ENCODE measurements at regions of chr2 and their contacts with region 1.

Region 1: GRCh38 chr2:134897932-134898331 is 20.7 kb upstream of the CCNT2 start:
- DNase-seq: peak; percentile 8
- ATAC-seq: no peak
- H3K4me3 ChIP-seq: no peak overlapping the region
- H3K27ac ChIP-seq: no peak overlapping the region
- H3K4me1 ChIP-seq: no peaks in the 10 kb centered on the region
- H3K27me3 ChIP-seq: no peaks in the 10 kb centered on the region
- CTCF ChIP-seq: peak; percentile 51
- POLR2A ChIP-seq: no peak
- RAD21 ChIP-seq: peak; percentile 53

Region 2: GRCh38 chr2:134460583-134460998 is 437.3 kb before region 1 on chr2:
- CTCF ChIA-PET with region 1: interaction called, 3 read pairs
- POLR2A ChIA-PET with region 1: no interaction called
- dilution Hi-C with region 1: no loop called
- in situ Hi-C with region 1: loop called (anchors 5 kb)
- intact Hi-C with region 1: loop called (anchors 1 kb)
- DNase-seq: peak; percentile 47
- ATAC-seq: peak; percentile 74
- H3K4me3 ChIP-seq: no peak overlapping the region
- H3K27ac ChIP-seq: no peak overlapping the region
- H3K4me1 ChIP-seq: no peaks in the 10 kb centered on the region
- H3K27me3 ChIP-seq: peaks cover 15% of the 10 kb centered on the region
- CTCF ChIP-seq: peak; percentile 58
- POLR2A ChIP-seq: no peak
- RAD21 ChIP-seq: peak; percentile 66

Region 3: DNA sequence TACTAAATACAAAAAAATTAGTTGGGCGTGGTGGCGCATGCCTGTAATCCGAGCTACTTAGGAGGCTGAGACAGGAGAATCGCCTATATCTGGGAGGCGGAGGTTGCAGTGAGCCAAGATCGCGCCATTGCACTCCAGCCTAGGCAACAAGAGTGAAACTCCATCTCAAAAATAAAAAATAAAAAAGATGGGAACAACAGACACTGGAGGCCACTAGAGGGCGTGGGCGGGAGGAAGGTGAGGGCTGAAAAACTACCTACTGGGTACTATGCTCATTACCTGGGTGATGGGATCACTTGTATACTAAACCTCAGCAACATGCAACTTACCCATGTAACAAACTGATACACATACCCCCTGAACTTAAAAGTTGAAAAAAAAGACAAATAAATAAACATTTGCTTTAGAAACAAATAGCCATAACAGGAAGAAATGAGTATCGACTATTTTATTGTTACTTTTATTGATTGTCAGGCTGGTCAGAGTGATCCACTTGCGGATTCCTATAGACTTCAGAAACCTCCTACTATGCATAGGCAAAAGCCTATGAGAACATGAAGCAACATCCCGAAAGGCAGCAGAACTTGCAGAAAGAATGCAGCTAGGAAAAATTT is 240.2 kb before region 1 on chr2:
- CTCF ChIA-PET with region 1: no interaction called
- POLR2A ChIA-PET with region 1: no interaction called
- dilution Hi-C with region 1: no loop called
- in situ Hi-C with region 1: no loop called
- intact Hi-C with region 1: loop called (anchors 2 kb)
- DNase-seq: no peak
- ATAC-seq: no peak
- H3K4me3 ChIP-seq: no peak overlapping the region
- H3K27ac ChIP-seq: no peak overlapping the region
- H3K4me1 ChIP-seq: no peaks in the 10 kb centered on the region
- H3K27me3 ChIP-seq: no peaks in the 10 kb centered on the region
- CTCF ChIP-seq: peak; percentile 30; the same call in 1 of the 2 replicates
- POLR2A ChIP-seq: no peak
- RAD21 ChIP-seq: no peak

Region 4: DNA sequence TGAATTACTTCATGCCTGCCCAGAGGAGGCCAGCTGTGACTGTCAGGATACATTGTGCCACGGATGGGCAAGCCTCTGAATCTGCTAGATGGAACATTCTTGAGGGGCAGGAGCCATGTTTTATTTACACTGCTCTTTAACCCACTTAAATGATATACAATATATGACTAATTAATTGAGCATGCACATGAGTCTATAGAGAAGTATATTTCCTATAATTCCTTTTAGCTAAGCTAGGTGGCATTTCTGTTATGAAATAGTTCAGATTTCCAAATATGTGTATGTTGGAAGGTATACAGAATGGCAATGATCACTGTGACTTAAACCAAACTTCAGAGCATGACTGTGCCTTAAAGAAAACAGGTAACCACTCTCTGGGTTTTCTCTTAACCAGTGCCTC is 285.9 kb after region 1 on chr2:
- CTCF ChIA-PET with region 1: no interaction called
- POLR2A ChIA-PET with region 1: no interaction called
- dilution Hi-C with region 1: no loop called
- in situ Hi-C with region 1: no loop called
- intact Hi-C with region 1: no loop called
- DNase-seq: peak; percentile 33
- ATAC-seq: peak; percentile 69
- H3K4me3 ChIP-seq: no peak overlapping the region
- H3K27ac ChIP-seq: no peak overlapping the region
- H3K4me1 ChIP-seq: peaks cover 2% of the 10 kb centered on the region; the same call in 1 of the 2 replicates
- H3K27me3 ChIP-seq: no peaks in the 10 kb centered on the region
- CTCF ChIP-seq: no peak
- POLR2A ChIP-seq: no peak
- RAD21 ChIP-seq: no peak

Measured in IMR-90 (cell line).